ENCODE measurements at regions of chr2 and their contacts with region 1.

Region 1: DNA sequence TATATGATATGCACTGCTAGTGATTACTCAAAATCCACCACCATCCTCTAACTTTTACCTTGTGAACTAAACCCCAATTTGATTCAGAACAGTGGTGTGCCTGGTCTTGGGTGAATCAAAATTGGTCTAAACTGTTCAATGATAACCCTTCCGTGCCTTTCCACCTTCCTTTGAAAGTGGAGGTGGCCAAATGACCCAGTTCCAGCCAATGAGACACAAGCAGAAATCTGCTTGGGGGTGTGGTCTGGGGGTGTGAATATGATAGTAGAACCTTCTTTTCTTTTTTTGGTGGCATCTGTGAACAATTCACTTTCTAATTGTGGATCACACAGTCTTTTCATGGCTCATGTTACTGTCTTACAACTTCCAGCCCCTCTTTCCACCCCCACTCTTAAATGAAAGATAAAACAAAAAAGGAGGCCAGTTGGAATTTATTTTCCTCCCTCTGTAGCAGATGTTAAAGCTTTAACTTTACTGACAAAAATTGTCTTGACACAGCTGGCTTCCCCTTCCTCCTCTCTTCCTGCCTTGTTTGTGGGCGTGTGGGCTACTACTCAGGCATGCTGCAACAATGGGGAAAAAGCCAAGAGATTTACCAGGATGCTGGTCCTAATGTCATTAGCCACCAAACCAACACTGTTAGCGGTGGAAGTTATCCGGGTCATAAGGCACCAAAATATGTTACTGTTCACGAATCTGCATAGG is 58.8 kb upstream of the ANKRD44 start:
- DNase-seq: no peak
- ATAC-seq: no peak

Region 2: DNA sequence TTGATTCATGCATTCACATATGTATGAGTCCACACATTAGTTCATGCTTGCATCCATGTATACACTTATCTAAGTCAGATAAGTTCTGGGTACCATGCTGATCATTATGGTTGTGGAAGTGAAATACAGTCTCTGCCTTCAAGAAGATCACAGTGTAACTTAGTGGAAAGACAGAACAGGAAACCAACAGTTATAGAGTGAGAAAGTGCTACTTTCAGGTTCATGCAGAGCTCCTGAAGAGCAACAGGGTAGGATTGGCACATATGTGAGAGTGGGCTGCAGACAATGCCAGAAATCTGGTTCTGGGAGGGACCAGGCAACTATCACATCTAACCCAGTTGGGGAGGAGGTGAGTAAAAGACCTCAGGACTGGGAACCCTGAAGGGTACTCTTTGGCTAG is 407.5 kb before region 1 on chr2:
- intact Hi-C with region 1: no loop called
- DNase-seq: no peak
- ATAC-seq: no peak

Region 3: GRCh38 chr2:197075759-197076337 is 293.5 kb before region 1 on chr2:
- intact Hi-C with region 1: no loop called
- DNase-seq: no peak
- ATAC-seq: no peak

Region 4: DNA sequence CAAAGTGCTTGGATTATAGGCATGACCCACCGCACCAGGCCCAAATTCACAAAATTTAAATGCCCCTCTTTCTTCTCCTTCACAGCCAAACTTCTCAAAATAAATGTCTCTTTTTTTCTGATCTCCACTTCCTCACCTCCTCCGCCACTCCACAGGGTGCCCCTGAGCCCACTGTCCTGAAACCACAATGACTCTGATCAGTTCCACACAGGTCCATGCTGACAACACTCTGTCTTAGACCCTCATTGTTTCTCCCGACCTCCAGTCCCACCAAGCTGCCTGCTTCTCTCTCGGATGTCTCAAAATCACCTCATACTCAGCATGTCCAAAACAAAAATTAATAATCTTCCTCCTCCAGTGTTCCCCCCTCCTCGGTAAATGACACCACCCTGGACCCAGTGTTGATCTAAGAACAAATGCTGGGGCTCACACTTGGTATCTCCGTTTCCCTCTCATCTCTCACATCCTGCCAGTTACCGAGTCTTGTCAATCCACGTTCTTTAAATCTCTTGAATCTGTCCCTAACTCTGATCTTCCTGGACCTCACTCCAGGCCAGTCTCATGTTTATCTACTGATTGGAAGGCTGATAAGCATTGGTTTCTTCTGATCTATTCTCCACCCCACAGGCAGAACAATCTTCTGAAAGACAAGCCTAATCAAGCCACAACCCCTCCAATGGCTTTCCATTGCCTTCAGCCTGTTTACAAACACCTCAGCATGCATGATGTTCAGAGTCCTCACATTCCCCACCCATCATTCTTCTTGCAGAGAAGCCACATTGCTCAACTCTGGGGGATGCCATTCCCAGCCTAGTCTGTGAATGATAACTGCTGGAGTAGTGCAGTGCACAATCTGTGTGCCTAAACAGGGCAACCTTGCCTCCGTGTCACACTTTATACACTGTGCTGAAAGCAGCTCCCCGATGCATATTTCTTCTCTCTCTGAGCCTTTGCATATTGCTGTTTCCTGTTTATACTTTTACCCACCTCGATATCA is 46.4 kb before region 1 on chr2:
- intact Hi-C with region 1: loop called in 1 of 2 experiments (anchors 5 kb)
- DNase-seq: no peak
- ATAC-seq: no peak

Region 5: DNA sequence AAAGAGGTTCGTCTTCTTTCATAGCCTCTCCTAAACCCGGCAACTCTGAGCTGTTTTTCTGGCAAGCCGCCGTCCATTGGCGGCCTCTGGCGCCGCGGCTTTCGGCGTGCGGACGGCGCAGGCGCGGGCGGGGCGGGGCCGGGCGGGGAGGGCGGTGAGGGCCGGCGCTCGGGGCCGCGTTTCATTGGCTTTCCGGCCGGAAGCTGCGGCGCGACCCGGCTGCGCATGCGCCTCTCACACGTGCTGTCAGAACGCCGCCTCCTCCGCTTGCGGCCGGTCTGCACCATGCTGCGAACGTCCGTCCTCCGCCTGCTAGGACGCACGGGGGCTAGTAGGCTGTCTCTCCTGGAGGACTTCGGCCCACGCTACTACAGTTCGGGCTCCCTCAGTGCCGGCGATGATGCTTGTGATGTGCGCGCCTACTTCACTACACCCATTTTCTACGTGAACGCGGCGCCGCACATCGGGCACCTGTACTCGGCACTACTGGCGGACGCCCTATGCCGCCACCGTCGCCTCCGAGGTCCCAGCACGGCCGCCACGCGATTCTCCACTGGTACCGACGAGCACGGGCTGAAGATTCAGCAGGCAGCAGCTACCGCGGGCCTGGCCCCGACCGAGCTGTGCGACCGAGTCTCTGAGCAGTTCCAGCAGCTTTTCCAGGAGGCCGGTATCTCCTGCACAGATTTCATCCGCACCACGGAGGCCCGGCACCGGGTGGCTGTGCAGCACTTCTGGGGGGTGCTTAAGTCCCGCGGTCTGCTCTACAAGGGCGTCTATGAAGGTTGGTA is 335.9 kb after region 1 on chr2 and contains the start of gene MARS2:
- intact Hi-C with region 1: no loop called
- DNase-seq: peak; percentile 96
- ATAC-seq: peak; percentile 97
- total RNA-seq, gene MARS2: 6.0 to 11.0 TPM

Measured in left cardiac atrium (tissue), 4 donors.